ENCODE measurements at regions of chr20 and their contacts with region 1.

Region 1: DNA sequence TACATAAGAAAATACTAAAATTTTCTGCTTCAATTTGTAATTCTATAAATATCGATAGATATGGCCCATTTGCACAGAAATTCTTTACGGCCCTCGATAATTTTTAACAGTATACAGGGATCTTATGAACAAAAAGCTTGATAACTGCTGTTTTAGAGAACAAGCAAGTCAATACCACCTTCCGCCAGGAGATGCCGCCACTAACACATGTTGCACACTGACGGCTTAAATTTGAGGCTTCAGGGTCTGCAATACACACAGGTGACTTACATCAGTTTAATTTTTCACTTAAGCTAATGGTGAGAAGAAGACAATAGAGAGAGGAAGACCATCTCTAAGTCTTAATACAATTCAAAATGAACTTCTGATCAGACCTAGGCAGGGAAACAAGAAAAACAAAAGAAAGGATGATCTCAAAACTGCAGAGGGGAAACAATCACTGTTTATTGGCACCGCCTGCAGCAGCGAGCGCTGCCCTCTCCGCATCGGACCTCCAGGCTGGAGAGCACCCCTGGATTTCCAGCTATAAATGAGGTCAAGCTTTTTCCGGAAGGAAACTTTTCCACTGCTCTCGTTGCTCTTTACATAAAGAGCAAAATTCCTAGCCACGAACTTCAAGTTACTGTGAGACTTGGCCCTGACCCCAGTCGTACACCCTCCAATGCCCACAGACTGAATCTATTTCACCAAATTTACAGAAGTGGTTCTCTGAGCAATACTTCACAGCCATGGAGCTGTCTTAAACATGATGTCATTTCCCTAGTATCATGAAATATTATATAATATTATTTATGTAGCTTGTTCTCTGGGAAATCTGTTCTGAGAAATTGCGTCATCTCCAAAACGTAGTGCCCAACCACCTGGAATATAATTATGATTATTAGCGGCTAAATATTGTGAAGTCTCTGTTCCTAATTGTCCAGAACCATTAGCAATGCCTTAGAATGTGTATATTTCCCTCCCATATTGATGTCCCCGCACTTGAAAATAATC is 54.1 kb downstream of the OTOR start:
- DNase-seq: peak; percentile 50
- H3K4me3 Mint-ChIP-seq: no peak overlapping the region
- H3K27ac Mint-ChIP-seq: no peak overlapping the region
- H3K4me1 Mint-ChIP-seq: no peaks in the 10 kb centered on the region
- H3K27me3 Mint-ChIP-seq: peaks cover 46% of the 10 kb centered on the region
- CTCF ChIP-seq: no peak

Region 2: DNA sequence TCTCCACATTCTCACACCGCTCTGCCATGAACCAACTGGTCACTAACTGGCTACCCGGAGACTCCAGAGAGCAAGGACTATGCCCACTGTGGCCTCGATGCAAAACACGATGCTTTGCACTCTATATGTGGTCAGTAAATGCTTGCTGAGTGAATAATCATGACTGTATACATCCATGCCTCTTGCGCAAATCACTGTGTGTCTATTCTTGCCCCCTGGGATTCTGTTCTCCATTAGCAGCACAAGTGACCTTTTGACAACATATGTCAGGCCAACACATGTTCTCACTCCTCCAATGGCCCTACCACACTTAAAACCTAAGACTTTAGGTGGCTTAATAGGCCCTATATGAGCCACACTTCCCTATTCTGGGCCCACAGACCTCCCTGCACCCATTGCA is 245.9 kb before region 1 on chr20:
- CTCF ChIA-PET with region 1: no interaction called
- intact Hi-C with region 1: no loop called
- DNase-seq: no peak
- H3K4me3 Mint-ChIP-seq: no peak overlapping the region
- H3K27ac Mint-ChIP-seq: no peak overlapping the region
- H3K4me1 Mint-ChIP-seq: no peaks in the 10 kb centered on the region
- H3K27me3 Mint-ChIP-seq: no peaks in the 10 kb centered on the region
- CTCF ChIP-seq: no peak

Region 3: DNA sequence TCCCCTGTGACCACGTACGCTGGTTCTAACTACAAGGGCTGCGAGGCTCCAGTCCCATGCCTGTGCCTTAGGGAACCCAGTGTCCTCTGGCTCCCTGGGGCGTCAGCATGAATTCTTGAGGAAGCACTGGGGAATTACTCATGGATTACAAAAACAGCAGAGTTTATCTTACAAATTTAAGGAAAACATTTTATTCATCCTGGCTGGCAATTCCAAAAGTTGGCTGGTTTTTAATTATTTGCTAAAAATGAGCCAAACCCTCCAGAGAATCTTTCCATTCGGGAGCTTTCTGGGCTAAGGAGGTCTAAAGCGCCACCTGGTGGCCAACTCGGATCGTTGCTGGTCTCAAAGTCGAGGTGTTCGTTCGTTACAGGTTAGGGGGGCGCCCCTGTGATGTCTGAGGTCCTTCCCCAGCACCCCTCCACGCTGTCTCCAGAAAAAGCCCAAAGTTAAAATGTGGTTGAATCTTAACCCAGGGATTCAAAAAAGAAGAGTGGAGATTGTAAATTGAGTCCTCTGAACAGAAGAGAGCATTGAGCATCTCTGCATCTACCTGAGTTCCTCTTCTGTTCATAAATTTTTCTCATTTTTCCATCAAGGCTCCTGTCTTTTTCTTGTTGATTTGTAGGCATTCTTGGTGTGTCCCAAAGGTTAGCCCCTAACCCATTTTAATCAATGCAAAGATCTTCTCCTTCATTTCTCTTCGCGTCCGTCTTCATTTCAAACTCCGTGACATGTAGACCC is 629.6 kb after region 1 on chr20:
- CTCF ChIA-PET with region 1: interaction called, 5 read pairs
- intact Hi-C with region 1: loop called (anchors 2 kb)
- DNase-seq: peak; percentile 24
- H3K4me3 Mint-ChIP-seq: no peak overlapping the region
- H3K27ac Mint-ChIP-seq: no peak overlapping the region
- H3K4me1 Mint-ChIP-seq: no peaks in the 10 kb centered on the region
- H3K27me3 Mint-ChIP-seq: peaks cover 21% of the 10 kb centered on the region
- CTCF ChIP-seq: peak; percentile 51

Measured in Calu3 (cell line).